HCT116 (cell line): ENCODE measurements at regions of chr11 and their contacts with region 1.

Region 1: GRCh38 chr11:60130496-60130895 is 42.0 kb downstream of the MS4A2 start:
- DNase-seq: peak; percentile 47
- ATAC-seq: peak; percentile 97
- H3K4me3 ChIP-seq: no peak overlapping the region
- H3K27ac ChIP-seq: no peak overlapping the region
- H3K4me1 ChIP-seq: peaks cover 3 to 16% of the 10 kb centered on the region in 2 experiments; a peak in 3 of 4 replicates
- H3K27me3 ChIP-seq: no peaks in the 10 kb centered on the region
- CTCF ChIP-seq: peak; percentile 50 to 65 (median 54); a peak in 5 of 6 replicates
- POLR2A ChIP-seq: no peak
- RAD21 ChIP-seq: peak; percentile 73

Region 2: GRCh38 chr11:59456661-59457060 is 673.8 kb before region 1 on chr11 and contains the start of gene OR4D6:
- CTCF ChIA-PET with region 1: no interaction called
- POLR2A ChIA-PET with region 1: no interaction called
- RAD21 ChIA-PET with region 1: no interaction called
- intact Hi-C with region 1: no loop called
- DNase-seq: no peak
- ATAC-seq: no peak
- H3K4me3 ChIP-seq: no peak within 1 kb of the TSS
- H3K27ac ChIP-seq: no peak within 1 kb of the TSS
- H3K4me1 ChIP-seq: no peaks in the 10 kb centered on the region
- H3K27me3 ChIP-seq: no peaks in the 10 kb centered on the region
- CTCF ChIP-seq: no peak
- POLR2A ChIP-seq: no peak
- RAD21 ChIP-seq: no peak
- total RNA-seq, gene OR4D6: not detected

Region 3: GRCh38 chr11:59918987-59919589 is 211.4 kb before region 1 on chr11:
- CTCF ChIA-PET with region 1: no interaction called
- POLR2A ChIA-PET with region 1: no interaction called
- RAD21 ChIA-PET with region 1: no interaction called
- intact Hi-C with region 1: loop called (anchors 5 kb)
- DNase-seq: peak; percentile 56
- ATAC-seq: peak; percentile 85
- H3K4me3 ChIP-seq: no peak overlapping the region
- H3K27ac ChIP-seq: no peak overlapping the region
- H3K4me1 ChIP-seq: no peaks in the 10 kb centered on the region
- H3K27me3 ChIP-seq: no peaks in the 10 kb centered on the region
- CTCF ChIP-seq: peak; percentile 60 to 81 (median 77)
- POLR2A ChIP-seq: no peak
- RAD21 ChIP-seq: peak; percentile 89